ENCODE measurements at regions of chr12 and their contacts with region 1.

Region 1: DNA sequence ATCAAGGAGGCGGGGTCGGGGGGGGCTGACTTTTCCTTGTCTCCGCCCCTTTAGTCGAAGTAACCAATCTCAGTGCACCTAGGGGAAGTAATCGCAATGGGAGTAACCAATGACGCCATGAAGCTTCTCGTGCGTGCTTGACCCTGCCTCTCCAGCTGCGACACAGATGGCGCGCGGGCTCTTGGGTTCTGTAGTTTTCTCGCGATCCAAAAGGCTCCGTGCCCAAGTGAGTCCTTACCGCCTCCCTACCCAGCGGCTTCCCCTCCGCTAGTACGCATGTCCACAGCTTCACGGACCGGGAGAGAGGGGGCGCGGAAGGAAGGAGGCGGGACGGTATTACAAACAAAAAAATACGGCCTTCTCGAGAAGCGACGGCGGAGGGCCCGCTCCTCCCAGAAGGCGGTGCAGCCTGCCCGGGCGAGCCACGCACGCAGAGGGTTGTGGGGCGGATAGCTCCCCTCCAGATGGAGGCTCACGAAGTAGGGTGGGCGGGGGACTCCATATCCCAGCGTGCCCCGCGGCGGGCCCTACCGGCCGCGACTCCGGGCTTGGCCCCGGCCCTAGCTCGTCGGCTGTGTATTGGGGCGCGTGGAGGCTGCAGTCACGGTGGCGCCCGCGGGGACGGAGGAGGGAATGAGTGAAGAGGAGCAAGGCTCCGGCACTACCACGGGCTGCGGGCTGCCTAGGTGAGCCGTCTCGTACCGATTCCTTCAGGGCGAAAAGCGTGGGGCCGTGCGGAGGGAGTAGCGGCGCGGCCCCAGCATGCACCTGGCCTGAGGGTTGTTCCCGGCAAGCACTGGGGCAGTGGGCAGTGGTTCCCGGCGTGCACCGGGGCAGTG is at the start of gene TARBP2:
- DNase-seq: peak; percentile 98
- ATAC-seq: peak; percentile 74
- H3K4me3 Mint-ChIP-seq: peak within 1 kb of the TSS; percentile 86
- H3K27ac Mint-ChIP-seq: peak within 1 kb of the TSS; percentile 94
- H3K4me1 Mint-ChIP-seq: peaks cover 40% of the 10 kb centered on the region
- H3K27me3 Mint-ChIP-seq: no peaks in the 10 kb centered on the region
- CTCF ChIP-seq: no peak
- total RNA-seq, gene TARBP2: 69.0 to 74.0 TPM (median 69.1 TPM) in 3 replicates

Region 2: GRCh38 chr12:53379389-53380103 is 121.4 kb before region 1 on chr12:
- CTCF ChIA-PET with region 1: interaction called, 4 read pairs
- POLR2A ChIA-PET with region 1: interaction called, 11 read pairs
- DNase-seq: peak; percentile 95
- ATAC-seq: peak; percentile 87
- H3K4me3 Mint-ChIP-seq: no peak overlapping the region
- H3K27ac Mint-ChIP-seq: no peak overlapping the region
- H3K4me1 Mint-ChIP-seq: peaks cover 27% of the 10 kb centered on the region
- H3K27me3 Mint-ChIP-seq: peaks cover 3% of the 10 kb centered on the region; the same call in 1 of the 2 replicates
- CTCF ChIP-seq: no peak

Region 3: GRCh38 chr12:53476769-53477209 is 24.2 kb before region 1 on chr12:
- CTCF ChIA-PET with region 1: interaction called, 99 read pairs
- POLR2A ChIA-PET with region 1: interaction called, 17 read pairs
- DNase-seq: no peak
- ATAC-seq: peak; percentile 69
- H3K4me3 Mint-ChIP-seq: no peak overlapping the region
- H3K27ac Mint-ChIP-seq: peak overlapping the region; percentile 89
- H3K4me1 Mint-ChIP-seq: peaks cover 43% of the 10 kb centered on the region
- H3K27me3 Mint-ChIP-seq: no peaks in the 10 kb centered on the region
- CTCF ChIP-seq: peak; percentile 27; the same call in 1 of the 2 replicates

Region 4: GRCh38 chr12:53481957-53482586 is 18.9 kb before region 1 on chr12:
- CTCF ChIA-PET with region 1: interaction called, 99 read pairs
- POLR2A ChIA-PET with region 1: interaction called, 17 read pairs
- DNase-seq: peak; percentile 19
- ATAC-seq: peak; percentile 63
- H3K4me3 Mint-ChIP-seq: no peak overlapping the region
- H3K27ac Mint-ChIP-seq: peak overlapping the region; percentile 86
- H3K4me1 Mint-ChIP-seq: peaks cover 17% of the 10 kb centered on the region
- H3K27me3 Mint-ChIP-seq: no peaks in the 10 kb centered on the region
- CTCF ChIP-seq: peak; percentile 13; the same call in 1 of the 2 replicates

Measured in WTC11 (cell line).